ENCODE measurements at regions of chr7 and their contacts with region 1.

Region 1: GRCh38 chr7:11343818-11344413 is 370.2 kb downstream of the PHF14 start:
- DNase-seq: peak; percentile 78
- ATAC-seq: no peak; the same call in 1 of the 2 replicates
- H3K4me3 ChIP-seq: peak overlapping the region; percentile 40; the same call in 1 of the 2 replicates
- H3K27ac ChIP-seq: no peak overlapping the region
- H3K4me1 ChIP-seq: no peaks in the 10 kb centered on the region
- H3K27me3 ChIP-seq: no peaks in the 10 kb centered on the region
- CTCF ChIP-seq: peak; percentile 81

Region 2: DNA sequence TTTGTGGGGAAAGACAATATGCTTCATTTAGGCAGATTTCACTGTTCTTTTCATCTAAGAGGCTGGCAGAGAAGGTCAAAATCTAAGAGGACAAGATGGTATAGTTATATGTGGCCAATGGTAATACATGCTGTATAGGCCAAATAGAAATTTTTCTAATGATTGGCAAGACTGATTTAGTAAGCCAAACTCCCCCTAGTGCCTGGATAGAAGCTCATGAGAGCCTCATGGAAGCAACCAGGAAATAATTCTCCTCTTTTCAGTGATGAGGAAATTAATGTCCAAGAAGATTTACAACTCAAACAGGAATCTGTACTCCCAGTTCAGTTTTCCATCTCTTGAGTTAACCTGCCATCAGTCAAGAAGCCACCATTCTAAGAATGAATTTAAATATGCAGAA is 623.9 kb before region 1 on chr7:
- CTCF ChIA-PET with region 1: no interaction called
- POLR2A ChIA-PET with region 1: no interaction called
- intact Hi-C with region 1: loop called (anchors 10 kb)
- DNase-seq: no peak
- ATAC-seq: no peak
- H3K4me3 ChIP-seq: no peak overlapping the region
- H3K27ac ChIP-seq: no peak overlapping the region
- H3K4me1 ChIP-seq: no peaks in the 10 kb centered on the region
- H3K27me3 ChIP-seq: no peaks in the 10 kb centered on the region
- CTCF ChIP-seq: no peak

Region 3: GRCh38 chr7:10889266-10889898 is 454.5 kb before region 1 on chr7:
- CTCF ChIA-PET with region 1: no interaction called
- POLR2A ChIA-PET with region 1: no interaction called
- intact Hi-C with region 1: loop called (anchors 2 kb)
- DNase-seq: peak; percentile 58
- ATAC-seq: peak; percentile 90
- H3K4me3 ChIP-seq: no peak overlapping the region
- H3K27ac ChIP-seq: no peak overlapping the region
- H3K4me1 ChIP-seq: no peaks in the 10 kb centered on the region
- H3K27me3 ChIP-seq: no peaks in the 10 kb centered on the region
- CTCF ChIP-seq: peak; percentile 82

Region 4: GRCh38 chr7:10939911-10940703 is 403.8 kb before region 1 on chr7:
- CTCF ChIA-PET with region 1: no interaction called
- POLR2A ChIA-PET with region 1: interaction called, 6 read pairs
- intact Hi-C with region 1: loop called (anchors 1 kb)
- DNase-seq: peak; percentile 90
- ATAC-seq: peak; percentile 89
- H3K4me3 ChIP-seq: peak overlapping the region; percentile 96
- H3K27ac ChIP-seq: peak overlapping the region; percentile 90
- H3K4me1 ChIP-seq: peaks cover 8% of the 10 kb centered on the region
- H3K27me3 ChIP-seq: no peaks in the 10 kb centered on the region
- CTCF ChIP-seq: no peak

Region 5: DNA sequence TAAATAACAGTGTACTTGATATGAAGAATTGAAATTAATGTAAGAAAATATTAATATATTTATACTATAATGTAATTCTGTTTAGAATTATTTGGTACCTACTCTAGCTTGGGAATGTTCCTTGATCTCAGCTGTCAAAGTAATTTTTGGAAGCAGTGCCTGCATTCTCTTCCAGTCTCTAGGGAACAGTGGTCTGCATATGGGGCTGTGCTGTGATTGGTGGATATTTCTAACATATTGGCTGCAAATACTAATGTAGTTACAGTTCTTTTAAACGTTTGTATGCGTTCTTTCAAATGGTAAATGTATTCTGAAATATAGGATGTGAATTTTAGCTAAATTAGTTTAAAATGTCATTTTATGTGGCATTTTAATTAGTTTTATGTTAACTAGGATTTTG is 283.0 kb before region 1 on chr7:
- CTCF ChIA-PET with region 1: no interaction called
- POLR2A ChIA-PET with region 1: no interaction called
- intact Hi-C with region 1: loop called (anchors 5 kb)
- DNase-seq: no peak
- ATAC-seq: no peak
- H3K4me3 ChIP-seq: no peak overlapping the region
- H3K27ac ChIP-seq: no peak overlapping the region
- H3K4me1 ChIP-seq: no peaks in the 10 kb centered on the region
- H3K27me3 ChIP-seq: no peaks in the 10 kb centered on the region
- CTCF ChIP-seq: no peak

Region 6: DNA sequence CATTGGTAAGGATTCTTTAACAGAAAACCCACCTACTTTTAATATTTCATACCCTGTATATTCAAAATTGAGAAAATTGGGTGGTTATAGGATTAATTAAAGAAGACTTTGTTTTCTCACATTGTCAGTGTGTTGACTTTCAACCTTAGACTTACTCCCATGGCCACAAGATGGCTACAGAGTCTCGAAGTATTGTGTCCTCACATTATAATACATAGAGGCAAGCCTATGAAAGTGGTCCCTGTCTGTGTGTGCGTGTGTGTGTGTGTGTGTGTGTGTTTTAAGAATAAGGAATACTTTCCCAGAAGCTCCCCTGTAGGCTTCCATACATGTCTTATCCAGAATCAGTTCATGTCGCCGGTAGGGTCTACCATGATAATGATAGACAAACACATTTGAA is 190.2 kb before region 1 on chr7:
- CTCF ChIA-PET with region 1: no interaction called
- POLR2A ChIA-PET with region 1: no interaction called
- intact Hi-C with region 1: loop called (anchors 10 kb)
- DNase-seq: no peak
- ATAC-seq: no peak
- H3K4me3 ChIP-seq: no peak overlapping the region
- H3K27ac ChIP-seq: no peak overlapping the region
- H3K4me1 ChIP-seq: peaks cover 4% of the 10 kb centered on the region; the same call in 1 of the 2 replicates
- H3K27me3 ChIP-seq: no peaks in the 10 kb centered on the region
- CTCF ChIP-seq: peak; percentile 25; the same call in 1 of the 2 replicates

Region 7: GRCh38 chr7:11212080-11212711 is 131.7 kb before region 1 on chr7:
- CTCF ChIA-PET with region 1: interaction called, 4 read pairs
- POLR2A ChIA-PET with region 1: interaction called, 13 read pairs
- intact Hi-C with region 1: loop called (anchors 1 kb)
- DNase-seq: peak; percentile 71
- ATAC-seq: peak; percentile 66
- H3K4me3 ChIP-seq: peak overlapping the region; percentile 45; the same call in 1 of the 2 replicates
- H3K27ac ChIP-seq: no peak overlapping the region
- H3K4me1 ChIP-seq: peaks cover 15% of the 10 kb centered on the region
- H3K27me3 ChIP-seq: no peaks in the 10 kb centered on the region
- CTCF ChIP-seq: peak; percentile 84

Region 8: DNA sequence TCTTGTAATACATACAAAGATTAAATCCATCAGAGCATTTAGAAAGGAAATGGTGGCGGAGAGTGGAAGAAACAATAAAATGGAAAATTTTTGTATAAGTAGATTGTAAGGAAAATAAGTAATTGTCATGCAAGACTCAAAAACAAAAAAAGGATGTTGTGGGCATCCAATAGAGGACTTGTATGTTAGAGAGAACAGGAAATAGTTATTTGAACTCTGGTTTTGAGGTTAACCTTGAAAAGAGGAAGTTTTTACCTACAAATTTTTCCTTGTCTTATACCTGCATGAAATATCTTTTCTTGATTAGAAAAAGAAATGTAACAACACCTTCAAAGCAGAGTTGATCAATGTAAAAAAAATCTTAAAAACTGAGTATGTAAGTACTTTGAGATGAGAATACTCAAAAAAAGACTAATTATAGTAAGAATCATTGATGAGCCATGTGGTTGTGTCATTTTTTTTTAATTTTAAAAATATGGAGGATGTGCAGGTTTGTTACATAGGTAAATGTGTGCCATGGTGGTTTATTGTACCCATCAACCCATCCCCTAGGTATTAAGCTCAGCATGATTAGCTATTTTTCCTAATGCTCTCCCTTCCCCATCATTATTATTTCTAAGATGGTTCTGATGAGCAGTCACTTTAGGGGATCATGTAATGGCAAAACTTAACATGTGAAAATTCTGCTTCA is 879.1 kb after region 1 on chr7:
- CTCF ChIA-PET with region 1: no interaction called
- POLR2A ChIA-PET with region 1: no interaction called
- intact Hi-C with region 1: no loop called
- DNase-seq: no peak
- ATAC-seq: no peak
- H3K4me3 ChIP-seq: no peak overlapping the region
- H3K27ac ChIP-seq: no peak overlapping the region
- H3K4me1 ChIP-seq: peaks cover 3% of the 10 kb centered on the region; the same call in 1 of the 2 replicates
- H3K27me3 ChIP-seq: no peaks in the 10 kb centered on the region
- CTCF ChIP-seq: no peak